Activated CD4-positive, alpha-beta T cell treated with anti-CD3 and anti-CD28 coated beads, Interleukin-2, amount 10 ng/mL, durations not matched to agents 24 days and 14 days (primary cell): ENCODE measurements at regions of chr1 and their contacts with region 1.

Region 1: DNA sequence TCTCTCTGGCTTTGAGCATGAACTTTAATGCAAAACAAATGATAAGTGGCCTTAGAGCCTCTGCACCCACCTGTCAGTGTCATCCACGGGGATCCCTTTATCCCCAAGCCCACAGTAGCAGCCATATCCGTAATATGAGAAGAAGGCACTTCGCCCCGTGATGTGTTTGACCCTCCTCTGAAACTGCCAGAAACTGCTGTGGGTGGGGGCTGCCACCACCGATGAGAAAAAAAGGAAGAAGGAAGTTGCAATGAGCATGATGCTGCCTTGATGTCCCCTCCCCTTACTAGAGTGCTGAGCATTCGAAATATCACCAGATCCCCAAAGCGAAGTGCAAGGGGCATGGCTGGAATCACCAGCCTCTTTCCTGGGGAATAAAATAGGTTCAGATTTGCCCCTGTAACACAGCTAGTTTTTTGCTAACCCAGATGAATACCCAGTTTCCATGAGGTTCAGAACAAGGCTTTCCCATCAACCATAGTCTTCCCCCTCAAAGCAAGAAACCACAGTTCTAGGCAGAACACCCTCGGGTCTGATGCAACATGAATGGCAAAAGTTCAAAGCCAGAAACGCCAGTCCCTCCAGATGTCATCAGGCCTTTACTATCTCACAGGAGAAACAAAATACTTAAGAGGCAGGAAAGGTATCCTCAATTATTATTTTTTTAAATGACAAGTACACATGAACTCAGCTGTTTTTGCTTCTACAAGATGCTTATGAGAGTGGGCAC is 10.8 kb upstream of the UBXN10 start:
- DNase-seq: no peak
- H3K4me3 Mint-ChIP-seq: peak overlapping the region; percentile 36
- H3K27ac Mint-ChIP-seq: peak overlapping the region; percentile 23
- H3K4me1 Mint-ChIP-seq: peaks cover 30% of the 10 kb centered on the region
- H3K27me3 Mint-ChIP-seq: no peaks in the 10 kb centered on the region

Region 2: GRCh38 chr1:20185834-20186782 is 11.0 kb after region 1 on chr1 and contains the starts of genes PLA2G2C and UBXN10:
- intact Hi-C with region 1: loop called (anchors 1 kb)
- DNase-seq: peak; percentile 92
- H3K4me3 Mint-ChIP-seq: peak within 1 kb of the TSS; percentile 80
- H3K27ac Mint-ChIP-seq: peak within 1 kb of the TSS; percentile 97
- H3K4me1 Mint-ChIP-seq: peaks cover 55% of the 10 kb centered on the region
- H3K27me3 Mint-ChIP-seq: peaks cover 27% of the 10 kb centered on the region
- total RNA-seq, gene PLA2G2C: 0.28 and 0.40 TPM in 2 replicates
- total RNA-seq, gene UBXN10: 1.2 and 1.3 TPM in 2 replicates

Region 3: DNA sequence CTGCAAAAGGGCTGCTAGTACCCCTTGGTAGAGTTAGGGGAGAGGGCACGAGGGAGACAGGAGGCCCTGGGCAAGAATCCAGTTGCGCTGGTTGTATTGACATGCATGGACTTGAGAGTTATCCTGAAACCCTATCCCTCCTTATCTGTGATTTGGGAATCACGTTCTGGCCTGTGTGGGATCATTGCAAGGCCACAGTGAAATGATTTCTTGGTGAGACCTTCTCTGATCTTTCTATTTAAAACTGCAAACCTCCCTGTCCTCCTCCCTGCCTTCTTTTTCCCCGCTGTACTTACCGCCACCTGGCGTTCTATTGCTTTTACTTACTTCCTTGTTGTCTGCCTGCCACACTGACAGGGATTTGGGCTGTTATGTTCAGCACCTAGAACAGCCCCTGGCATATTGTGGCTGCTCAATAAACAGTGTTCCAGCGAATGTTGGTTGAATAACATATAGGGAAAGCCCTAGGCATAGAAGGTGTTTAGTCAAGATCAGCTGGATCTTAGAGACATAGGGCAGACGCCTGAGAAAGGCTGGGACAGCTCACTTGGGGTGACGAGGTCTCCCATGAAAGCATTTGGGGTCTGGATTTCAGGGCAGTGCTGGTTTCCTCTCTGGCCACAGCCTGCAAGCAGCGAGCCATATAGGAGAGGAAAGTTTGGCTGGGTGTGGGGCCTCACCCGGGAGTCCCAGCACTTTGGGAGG is 1359.7 kb after region 1 on chr1:
- intact Hi-C with region 1: no loop called
- DNase-seq: peak; percentile 71
- H3K4me3 Mint-ChIP-seq: no peak overlapping the region
- H3K27ac Mint-ChIP-seq: no peak overlapping the region
- H3K4me1 Mint-ChIP-seq: no peaks in the 10 kb centered on the region
- H3K27me3 Mint-ChIP-seq: peaks cover 21% of the 10 kb centered on the region